Activated CD4-positive, alpha-beta memory T cell treated with anti-CD3 and anti-CD28 coated beads for 36 hours (primary cell): ENCODE measurements at regions of chr3 and their contacts with region 1.

Region 1: DNA sequence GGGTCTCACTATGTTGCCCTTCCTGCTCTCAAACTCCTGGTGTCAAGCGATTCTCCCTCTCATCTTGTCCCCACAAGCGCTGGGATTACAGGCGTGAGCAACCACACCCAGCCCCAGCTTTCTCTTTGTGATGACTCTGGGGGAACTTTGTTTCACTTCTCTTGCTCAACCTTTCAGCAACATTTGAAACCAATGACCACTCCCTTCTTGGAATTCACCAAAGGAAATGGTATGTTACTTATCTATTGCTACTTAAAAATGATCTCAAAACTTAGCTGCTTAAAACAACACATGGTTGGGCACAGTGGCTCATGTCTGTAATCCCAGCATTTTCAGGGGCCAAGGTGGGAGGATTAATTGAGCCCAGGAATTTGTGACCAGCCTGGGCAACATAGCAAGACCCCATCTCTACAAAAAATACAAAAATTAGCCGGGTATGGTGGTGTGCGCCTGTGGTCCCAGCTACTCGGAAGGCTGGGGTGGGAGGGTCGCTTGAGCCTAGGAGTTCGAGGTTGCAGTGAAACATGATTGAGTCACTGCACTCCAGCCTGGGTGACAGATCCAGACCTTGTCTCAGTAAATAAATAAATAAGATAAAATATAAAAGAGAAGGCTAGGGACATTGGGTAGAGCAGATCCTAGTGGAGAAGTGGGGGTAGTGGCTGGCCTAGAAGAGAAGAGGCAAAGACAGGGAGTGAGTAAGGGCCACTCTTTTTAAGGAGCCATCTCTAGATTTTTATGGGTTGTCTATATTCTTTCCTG is 10.3 kb upstream of the COPG1 start:
- DNase-seq: peak; percentile 64
- H3K4me3 Mint-ChIP-seq: peak overlapping the region; percentile 15
- H3K27ac Mint-ChIP-seq: peak overlapping the region; percentile 81
- H3K4me1 Mint-ChIP-seq: peaks cover 20% of the 10 kb centered on the region
- H3K27me3 Mint-ChIP-seq: no peaks in the 10 kb centered on the region

Region 2: GRCh38 chr3:129058441-129059200 is 180.5 kb before region 1 on chr3:
- CTCF ChIA-PET with region 1: interaction called, 113 read pairs
- POLR2A ChIA-PET with region 1: no interaction called
- intact Hi-C with region 1: no loop called
- DNase-seq: peak; percentile 38
- H3K4me3 Mint-ChIP-seq: no peak overlapping the region
- H3K27ac Mint-ChIP-seq: no peak overlapping the region
- H3K4me1 Mint-ChIP-seq: peaks cover 7% of the 10 kb centered on the region
- H3K27me3 Mint-ChIP-seq: no peaks in the 10 kb centered on the region

Region 3: DNA sequence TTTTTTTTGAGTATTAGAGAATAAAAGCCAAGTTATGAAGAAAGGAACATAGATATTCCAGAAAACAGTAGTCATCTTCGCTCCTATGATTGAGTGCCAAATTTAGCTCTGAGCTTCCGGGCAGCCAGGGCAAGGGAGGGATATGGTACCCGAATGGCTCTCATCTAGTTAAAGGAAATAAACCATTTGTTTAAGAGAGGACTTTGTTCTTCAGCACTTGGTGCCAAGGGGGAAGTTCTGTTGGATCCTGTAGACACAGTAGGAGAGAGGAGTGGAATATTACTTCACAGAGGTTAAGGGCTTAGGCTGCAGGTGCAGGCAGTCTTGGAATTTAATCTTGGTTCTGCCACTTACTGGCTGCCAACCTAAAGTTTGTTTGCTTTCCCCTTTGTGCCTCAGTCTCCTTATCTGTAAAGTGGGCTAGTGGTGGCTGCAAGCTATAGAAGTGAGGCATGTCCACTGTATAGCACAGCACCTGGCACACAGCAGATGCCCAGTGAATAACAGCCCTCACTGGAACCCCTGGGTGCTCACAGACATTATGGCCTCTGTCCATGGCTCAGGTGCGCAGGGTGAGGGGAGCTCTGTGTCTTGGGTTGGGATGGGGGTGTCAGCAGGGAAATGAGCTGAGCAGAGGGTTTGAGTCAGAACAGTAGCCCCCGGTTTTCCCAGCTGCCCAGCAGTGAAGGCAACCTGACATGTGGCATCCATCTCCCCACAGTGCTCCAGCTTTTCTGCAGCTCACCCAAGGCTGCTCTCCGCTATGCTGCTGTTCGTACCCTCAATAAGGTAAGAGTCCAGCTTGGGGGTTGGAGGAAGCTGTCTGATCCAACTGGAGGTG is 20.7 kb after region 1 on chr3:
- CTCF ChIA-PET with region 1: no interaction called
- POLR2A ChIA-PET with region 1: no interaction called
- intact Hi-C with region 1: no loop called
- DNase-seq: no peak
- H3K4me3 Mint-ChIP-seq: no peak overlapping the region
- H3K27ac Mint-ChIP-seq: no peak overlapping the region
- H3K4me1 Mint-ChIP-seq: no peaks in the 10 kb centered on the region
- H3K27me3 Mint-ChIP-seq: no peaks in the 10 kb centered on the region

Region 4: DNA sequence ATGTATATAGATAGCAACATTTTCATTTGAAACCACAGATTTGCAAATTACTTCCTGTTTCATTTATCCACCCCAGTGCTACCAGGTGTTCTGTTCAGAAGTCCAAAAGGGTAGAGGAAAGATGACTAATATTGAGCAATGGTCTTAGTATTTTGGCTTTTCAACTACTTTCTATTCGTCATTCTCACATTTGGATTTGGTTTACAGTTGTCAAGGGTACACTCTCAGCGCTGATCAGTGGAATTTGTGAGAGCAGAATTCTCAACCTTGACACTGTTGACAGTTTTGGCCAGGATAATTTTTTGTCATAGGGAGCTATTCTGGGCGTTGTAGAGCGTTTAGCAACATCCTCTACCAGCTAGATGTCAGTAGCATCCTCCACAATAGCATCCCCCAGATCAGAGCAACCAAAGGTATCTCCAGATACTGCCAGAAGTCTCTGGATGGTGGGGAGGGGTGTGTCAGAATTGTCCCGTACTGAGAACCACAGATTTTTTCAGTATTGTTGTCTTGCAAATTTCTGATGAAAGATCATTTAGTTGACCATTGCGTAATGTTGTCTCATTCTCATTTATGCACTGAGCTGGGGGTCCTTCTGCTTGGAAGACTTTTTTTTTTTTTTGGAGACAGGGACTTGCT is 43.7 kb after region 1 on chr3:
- CTCF ChIA-PET with region 1: no interaction called
- POLR2A ChIA-PET with region 1: no interaction called
- intact Hi-C with region 1: no loop called
- DNase-seq: peak; percentile 35
- H3K4me3 Mint-ChIP-seq: peak overlapping the region; percentile 24
- H3K27ac Mint-ChIP-seq: peak overlapping the region; percentile 82
- H3K4me1 Mint-ChIP-seq: peaks cover 43% of the 10 kb centered on the region
- H3K27me3 Mint-ChIP-seq: no peaks in the 10 kb centered on the region